ENCODE measurements at regions of chr18 and their contacts with region 1.

Region 1: GRCh38 chr18:59899298-59900221 is at the start of gene PMAIP1:
- DNase-seq: peak; percentile 81
- ATAC-seq: peak; percentile 83
- H3K4me3 ChIP-seq: peak within 1 kb of the TSS; percentile 80 to 82
- H3K27ac ChIP-seq: peak within 1 kb of the TSS; percentile 87
- H3K4me1 ChIP-seq: peaks cover 30 to 49% of the 10 kb centered on the region in 2 experiments
- H3K27me3 ChIP-seq: no peaks in the 10 kb centered on the region
- CTCF ChIP-seq: no peak
- POLR2A ChIP-seq: peak; percentile 98
- RAD21 ChIP-seq: no peak
- total RNA-seq, gene PMAIP1: 66.7 TPM

Region 2: GRCh38 chr18:59853380-59853779 is 46.2 kb before region 1 on chr18:
- CTCF ChIA-PET with region 1: no interaction called
- POLR2A ChIA-PET with region 1: no interaction called
- RAD21 ChIA-PET with region 1: no interaction called
- intact Hi-C with region 1: no loop called
- DNase-seq: no peak
- ATAC-seq: no peak
- H3K4me3 ChIP-seq: no peak overlapping the region
- H3K27ac ChIP-seq: no peak overlapping the region
- H3K4me1 ChIP-seq: no peaks in the 10 kb centered on the region
- H3K27me3 ChIP-seq: no peaks in the 10 kb centered on the region
- CTCF ChIP-seq: no peak
- POLR2A ChIP-seq: no peak
- RAD21 ChIP-seq: no peak

Region 3: GRCh38 chr18:59874166-59874565 is 25.4 kb before region 1 on chr18:
- CTCF ChIA-PET with region 1: no interaction called
- POLR2A ChIA-PET with region 1: interaction called, 14 read pairs
- RAD21 ChIA-PET with region 1: no interaction called
- intact Hi-C with region 1: no loop called
- DNase-seq: peak; percentile 65
- ATAC-seq: peak; percentile 88
- H3K4me3 ChIP-seq: no peak overlapping the region
- H3K27ac ChIP-seq: no peak overlapping the region
- H3K4me1 ChIP-seq: peaks cover 6 to 22% of the 10 kb centered on the region in 2 experiments
- H3K27me3 ChIP-seq: no peaks in the 10 kb centered on the region
- CTCF ChIP-seq: no peak
- POLR2A ChIP-seq: no peak
- RAD21 ChIP-seq: no peak

Region 4: GRCh38 chr18:59885579-59886163 is 13.9 kb before region 1 on chr18:
- CTCF ChIA-PET with region 1: no interaction called
- POLR2A ChIA-PET with region 1: interaction called, 31 read pairs
- RAD21 ChIA-PET with region 1: no interaction called
- intact Hi-C with region 1: no loop called
- DNase-seq: no peak
- ATAC-seq: no peak
- H3K4me3 ChIP-seq: peak overlapping the region in 1 of 2 experiments; percentile 14; a peak in 1 of 4 replicates
- H3K27ac ChIP-seq: no peak overlapping the region
- H3K4me1 ChIP-seq: peaks cover 19 to 42% of the 10 kb centered on the region in 2 experiments
- H3K27me3 ChIP-seq: no peaks in the 10 kb centered on the region
- CTCF ChIP-seq: no peak
- POLR2A ChIP-seq: no peak
- RAD21 ChIP-seq: no peak

Region 5: GRCh38 chr18:59950215-59950944 is 50.8 kb after region 1 on chr18:
- CTCF ChIA-PET with region 1: no interaction called
- POLR2A ChIA-PET with region 1: interaction called, 36 read pairs
- RAD21 ChIA-PET with region 1: no interaction called
- intact Hi-C with region 1: loop called (anchors 1 kb)
- DNase-seq: no peak
- ATAC-seq: no peak
- H3K4me3 ChIP-seq: no peak overlapping the region
- H3K27ac ChIP-seq: peak overlapping the region; percentile 80; the same call in 1 of the 2 replicates
- H3K4me1 ChIP-seq: peaks cover 54 to 69% of the 10 kb centered on the region in 2 experiments
- H3K27me3 ChIP-seq: no peaks in the 10 kb centered on the region
- CTCF ChIP-seq: no peak
- POLR2A ChIP-seq: no peak
- RAD21 ChIP-seq: no peak

Region 6: DNA sequence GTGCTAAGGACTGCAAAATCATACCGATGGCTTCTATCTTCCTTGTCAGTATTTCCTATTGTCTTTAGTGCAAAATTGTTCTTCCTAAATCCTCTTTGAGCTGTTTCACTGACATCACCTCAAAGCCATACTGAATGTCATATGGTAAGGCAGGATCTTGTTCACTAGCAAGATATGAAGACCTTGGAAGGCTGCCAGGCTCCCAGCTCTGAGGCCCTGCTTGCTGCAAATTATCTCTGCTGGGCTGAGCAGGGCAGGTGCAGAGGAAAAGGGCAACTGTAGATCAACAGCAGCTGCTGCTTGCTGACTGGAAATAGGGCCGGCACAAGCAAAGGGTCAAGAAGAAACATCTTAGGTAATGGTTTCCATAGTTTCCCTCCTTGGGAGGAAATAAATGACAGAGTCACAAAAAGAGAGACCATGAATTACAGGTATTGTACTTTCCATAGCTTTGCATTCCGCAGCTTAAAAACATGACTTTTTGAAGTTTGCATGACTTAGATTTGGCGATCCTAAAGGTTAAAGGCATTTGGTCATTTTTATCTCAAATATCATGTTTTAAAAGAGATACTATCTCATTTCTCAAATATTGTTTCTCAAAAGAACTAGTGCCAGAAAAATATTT is 58.5 kb after region 1 on chr18:
- CTCF ChIA-PET with region 1: no interaction called
- POLR2A ChIA-PET with region 1: interaction called, 36 read pairs
- RAD21 ChIA-PET with region 1: no interaction called
- intact Hi-C with region 1: loop called (anchors 1 kb)
- DNase-seq: peak; percentile 67
- ATAC-seq: peak; percentile 45
- H3K4me3 ChIP-seq: peak overlapping the region in 1 of 2 experiments; percentile 4; a peak in 2 of 4 replicates
- H3K27ac ChIP-seq: peak overlapping the region; percentile 54
- H3K4me1 ChIP-seq: peaks cover 75 to 89% of the 10 kb centered on the region in 2 experiments
- H3K27me3 ChIP-seq: no peaks in the 10 kb centered on the region
- CTCF ChIP-seq: no peak
- POLR2A ChIP-seq: no peak
- RAD21 ChIP-seq: no peak

Region 7: DNA sequence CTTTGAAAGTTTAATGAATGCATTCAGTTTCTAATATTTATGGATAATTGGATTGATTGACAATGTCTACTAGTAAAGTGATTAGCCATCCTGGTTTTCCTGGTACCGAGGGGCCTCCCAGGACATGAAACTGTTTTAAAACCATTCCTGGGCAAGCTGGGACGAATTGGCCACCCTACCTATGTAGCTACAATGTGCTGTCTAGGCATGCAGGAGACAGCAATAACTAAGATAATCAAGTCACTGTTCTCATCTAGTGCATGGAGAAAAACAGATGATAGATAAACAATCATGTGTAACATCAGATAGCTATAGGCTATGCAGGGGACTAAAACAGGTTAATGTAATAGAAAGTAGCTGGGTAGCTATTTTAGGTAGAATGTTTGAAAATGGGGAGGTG is 67.4 kb after region 1 on chr18:
- CTCF ChIA-PET with region 1: no interaction called
- POLR2A ChIA-PET with region 1: interaction called, 10 read pairs
- RAD21 ChIA-PET with region 1: no interaction called
- intact Hi-C with region 1: no loop called
- DNase-seq: no peak
- ATAC-seq: no peak
- H3K4me3 ChIP-seq: no peak overlapping the region
- H3K27ac ChIP-seq: no peak overlapping the region
- H3K4me1 ChIP-seq: peaks cover 0 to 3% of the 10 kb centered on the region in 2 experiments; a peak in 1 of 4 replicates
- H3K27me3 ChIP-seq: no peaks in the 10 kb centered on the region
- CTCF ChIP-seq: no peak
- POLR2A ChIP-seq: no peak
- RAD21 ChIP-seq: no peak

Measured in HCT116 (cell line).